ENCODE measurements at regions of chr12 and their contacts with region 1.

Region 1: GRCh38 chr12:126617312-126617711 is 1552.1 kb downstream of the AACS start:
- DNase-seq: peak; percentile 13
- H3K4me3 Mint-ChIP-seq: no peak overlapping the region
- H3K27ac Mint-ChIP-seq: no peak overlapping the region
- H3K4me1 Mint-ChIP-seq: no peaks in the 10 kb centered on the region
- H3K27me3 Mint-ChIP-seq: no peaks in the 10 kb centered on the region

Region 2: GRCh38 chr12:126069549-126070165 is 547.7 kb before region 1 on chr12:
- CTCF ChIA-PET with region 1: no interaction called
- POLR2A ChIA-PET with region 1: no interaction called
- intact Hi-C with region 1: loop called (anchors 2 kb)
- DNase-seq: peak; percentile 64
- H3K4me3 Mint-ChIP-seq: no peak overlapping the region
- H3K27ac Mint-ChIP-seq: no peak overlapping the region
- H3K4me1 Mint-ChIP-seq: no peaks in the 10 kb centered on the region
- H3K27me3 Mint-ChIP-seq: peaks cover 1% of the 10 kb centered on the region

Measured in activated CD4-positive, alpha-beta memory T cell treated with anti-CD3 and anti-CD28 coated beads for 36 hours (primary cell).